RWPE1 (cell line): ENCODE measurements at regions of chr11 and their contacts with region 1.

Region 1: DNA sequence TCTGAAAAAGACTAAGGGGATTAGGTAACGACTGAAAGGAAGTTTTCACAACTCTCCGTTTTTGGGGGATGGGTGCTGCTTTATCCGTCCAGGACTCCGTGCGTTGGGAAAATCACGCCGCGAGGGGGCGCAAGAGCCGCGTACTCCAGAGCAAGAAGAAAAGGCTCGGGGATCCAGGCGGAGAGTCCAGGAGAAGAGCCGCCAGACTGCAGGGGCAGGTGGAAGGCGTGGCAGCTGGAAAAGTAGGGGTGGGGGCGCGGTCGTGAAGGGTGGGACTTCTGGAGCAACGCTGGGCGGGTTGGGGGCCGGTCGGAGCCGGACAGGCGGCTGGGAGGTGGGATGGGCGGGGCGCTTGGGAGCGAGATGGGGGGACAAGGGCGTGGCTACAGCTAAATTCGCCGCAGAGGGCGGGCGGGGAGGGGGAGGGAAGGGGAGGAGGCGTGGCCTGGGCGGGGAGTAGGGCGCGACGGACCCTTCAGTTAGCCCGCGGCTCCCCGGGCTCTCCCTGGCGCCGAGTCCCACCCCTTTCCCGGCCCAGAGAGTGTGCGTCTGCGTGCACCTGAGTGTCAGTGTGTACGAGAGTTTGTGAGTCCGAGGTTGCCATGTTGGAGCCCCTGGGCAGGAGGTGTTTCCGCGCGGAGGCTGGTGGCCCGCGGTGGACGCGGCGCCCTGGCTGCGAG is 613 bp upstream of the ARHGEF17 start:
- DNase-seq: peak; percentile 98
- H3K27ac ChIP-seq: peak overlapping the region; percentile 98
- CTCF ChIP-seq: peak; percentile 84

Region 2: GRCh38 chr11:73393479-73394380 is 86.3 kb after region 1 on chr11:
- CTCF ChIA-PET with region 1: interaction called, 21 read pairs
- POLR2A ChIA-PET with region 1: no interaction called
- DNase-seq: peak; percentile 67
- H3K27ac ChIP-seq: peak overlapping the region; percentile 93
- CTCF ChIP-seq: peak; percentile 76

Region 3: DNA sequence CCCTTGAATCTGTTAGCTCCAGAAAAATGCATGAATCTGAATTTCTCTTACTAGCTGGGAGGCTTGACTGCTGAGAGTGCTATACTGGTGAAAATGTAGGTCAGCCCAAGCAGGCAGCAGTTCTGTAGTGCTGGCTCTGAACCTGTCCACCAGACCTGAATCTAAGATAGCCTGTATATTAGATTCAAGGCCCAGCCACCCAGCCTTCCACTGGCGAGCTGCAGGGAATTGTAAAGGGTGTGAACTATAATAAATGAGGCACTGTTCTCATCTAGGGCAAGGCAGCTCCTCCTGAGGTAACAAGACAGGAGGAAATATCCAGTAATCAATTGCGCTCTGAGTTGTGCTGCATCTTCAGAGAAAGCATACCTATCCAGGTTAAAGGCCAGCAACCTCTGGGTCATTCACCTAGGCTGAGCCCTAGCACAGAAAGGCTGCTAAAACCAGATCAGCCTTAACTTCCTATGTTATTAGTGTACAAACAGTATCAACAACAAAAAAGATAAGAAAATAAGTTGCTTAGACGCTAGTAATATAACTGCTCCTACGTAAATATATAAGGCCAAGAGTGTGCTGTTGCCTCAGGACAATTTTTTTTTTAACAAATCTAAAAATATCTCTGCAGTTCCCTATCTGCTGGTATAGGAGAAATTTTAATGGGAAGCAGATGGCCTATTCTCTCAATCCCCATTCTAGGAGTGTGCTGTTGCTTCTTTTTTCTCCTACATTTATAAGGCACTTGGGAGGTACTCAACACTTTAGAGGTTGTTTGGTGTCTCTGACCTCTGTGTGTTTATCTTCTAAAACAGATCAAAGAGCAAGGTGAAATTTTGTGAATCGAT is 131.8 kb after region 1 on chr11:
- CTCF ChIA-PET with region 1: no interaction called
- POLR2A ChIA-PET with region 1: no interaction called
- DNase-seq: no peak
- H3K27ac ChIP-seq: no peak overlapping the region
- CTCF ChIP-seq: no peak